ENCODE measurements at regions of chr1 and their contacts with region 1.

Region 1: DNA sequence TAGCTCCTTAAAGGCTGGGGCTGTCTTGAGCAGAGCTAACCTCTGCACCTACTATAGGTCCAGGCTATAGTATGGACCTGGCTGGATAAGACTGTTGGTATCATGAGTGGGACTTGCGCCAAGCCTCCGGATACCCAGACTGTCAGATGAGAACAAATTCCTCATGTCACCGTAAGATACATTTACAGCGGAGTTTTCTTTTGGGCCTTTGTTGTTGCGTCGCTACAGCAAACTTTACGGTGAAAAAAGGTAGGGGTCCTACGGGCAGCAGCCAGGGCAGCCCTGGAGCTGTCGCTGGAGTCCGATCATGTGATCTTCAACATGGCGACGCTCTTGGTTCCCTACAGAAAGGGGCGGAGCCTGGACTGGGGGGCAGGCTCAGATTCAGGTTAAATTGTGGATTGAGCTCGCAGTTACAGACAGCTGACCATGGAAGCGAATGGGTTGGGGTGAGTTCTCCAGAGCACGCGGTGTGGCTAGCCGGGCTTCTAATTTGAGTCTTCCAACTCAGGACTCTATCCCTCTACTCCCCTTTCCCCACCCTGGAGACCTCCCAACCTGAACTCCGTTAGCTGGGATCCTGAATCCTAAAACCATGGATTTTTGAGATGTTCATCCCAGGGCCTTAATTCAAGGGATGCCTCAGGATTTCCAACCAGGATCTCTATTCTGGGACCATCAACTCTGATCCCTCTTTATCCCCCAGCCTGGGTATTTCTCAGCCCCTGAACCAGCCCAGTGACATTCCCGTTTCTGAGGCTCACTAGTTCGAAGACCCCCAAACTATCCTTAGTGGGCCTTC is at the start of gene UROD:
- DNase-seq: peak; percentile 95
- H3K4me3 Mint-ChIP-seq: peak within 1 kb of the TSS; percentile 74
- H3K27ac Mint-ChIP-seq: peak within 1 kb of the TSS; percentile 88
- H3K4me1 Mint-ChIP-seq: peaks cover 42% of the 10 kb centered on the region
- H3K27me3 Mint-ChIP-seq: no peaks in the 10 kb centered on the region

Region 2: DNA sequence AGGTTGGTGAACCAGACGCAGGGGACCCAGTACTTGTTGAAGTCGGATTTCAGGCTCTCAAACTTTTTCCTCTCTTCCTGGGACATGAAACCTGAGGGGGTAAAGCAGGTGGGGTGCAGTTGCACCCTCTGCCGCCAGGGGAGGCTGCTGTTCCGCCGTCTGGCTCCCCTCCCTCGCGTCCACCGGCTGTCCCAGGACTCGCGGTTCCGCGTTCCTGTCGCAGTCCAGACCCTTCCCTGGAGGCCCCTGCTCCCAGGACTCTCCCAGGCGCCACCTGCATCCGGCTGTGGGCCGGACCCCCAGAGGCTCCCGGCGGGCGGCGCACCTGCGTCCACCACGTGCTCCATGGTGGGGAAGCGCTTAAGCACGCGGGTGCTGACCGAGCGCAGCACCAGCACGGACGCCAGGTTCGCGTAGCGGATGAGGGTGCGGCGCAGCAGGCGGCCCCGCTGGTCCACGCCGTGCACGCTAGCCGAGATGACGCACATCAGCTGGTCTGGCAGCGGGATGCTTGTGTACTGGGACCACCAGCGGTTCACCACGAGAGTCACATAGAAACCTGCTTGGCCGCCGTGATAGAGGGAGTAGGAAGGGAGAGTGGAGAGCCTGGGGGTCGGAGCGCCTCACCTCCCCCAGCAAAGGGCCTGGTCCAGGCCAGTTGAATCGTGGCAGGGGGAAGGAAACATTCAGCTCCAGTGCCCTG is 225.7 kb before region 1 on chr1:
- CTCF ChIA-PET with region 1: interaction called, 20 read pairs
- DNase-seq: peak; percentile 84
- H3K4me3 Mint-ChIP-seq: peak overlapping the region; percentile 68
- H3K27ac Mint-ChIP-seq: peak overlapping the region; percentile 45
- H3K4me1 Mint-ChIP-seq: peaks cover 40% of the 10 kb centered on the region
- H3K27me3 Mint-ChIP-seq: peaks cover 25% of the 10 kb centered on the region

Region 3: GRCh38 chr1:44792783-44793714 is 219.0 kb before region 1 on chr1:
- CTCF ChIA-PET with region 1: interaction called, 16 read pairs
- DNase-seq: peak; percentile 17
- H3K4me3 Mint-ChIP-seq: no peak overlapping the region
- H3K27ac Mint-ChIP-seq: no peak overlapping the region
- H3K4me1 Mint-ChIP-seq: peaks cover 3% of the 10 kb centered on the region
- H3K27me3 Mint-ChIP-seq: peaks cover 26% of the 10 kb centered on the region

Region 4: DNA sequence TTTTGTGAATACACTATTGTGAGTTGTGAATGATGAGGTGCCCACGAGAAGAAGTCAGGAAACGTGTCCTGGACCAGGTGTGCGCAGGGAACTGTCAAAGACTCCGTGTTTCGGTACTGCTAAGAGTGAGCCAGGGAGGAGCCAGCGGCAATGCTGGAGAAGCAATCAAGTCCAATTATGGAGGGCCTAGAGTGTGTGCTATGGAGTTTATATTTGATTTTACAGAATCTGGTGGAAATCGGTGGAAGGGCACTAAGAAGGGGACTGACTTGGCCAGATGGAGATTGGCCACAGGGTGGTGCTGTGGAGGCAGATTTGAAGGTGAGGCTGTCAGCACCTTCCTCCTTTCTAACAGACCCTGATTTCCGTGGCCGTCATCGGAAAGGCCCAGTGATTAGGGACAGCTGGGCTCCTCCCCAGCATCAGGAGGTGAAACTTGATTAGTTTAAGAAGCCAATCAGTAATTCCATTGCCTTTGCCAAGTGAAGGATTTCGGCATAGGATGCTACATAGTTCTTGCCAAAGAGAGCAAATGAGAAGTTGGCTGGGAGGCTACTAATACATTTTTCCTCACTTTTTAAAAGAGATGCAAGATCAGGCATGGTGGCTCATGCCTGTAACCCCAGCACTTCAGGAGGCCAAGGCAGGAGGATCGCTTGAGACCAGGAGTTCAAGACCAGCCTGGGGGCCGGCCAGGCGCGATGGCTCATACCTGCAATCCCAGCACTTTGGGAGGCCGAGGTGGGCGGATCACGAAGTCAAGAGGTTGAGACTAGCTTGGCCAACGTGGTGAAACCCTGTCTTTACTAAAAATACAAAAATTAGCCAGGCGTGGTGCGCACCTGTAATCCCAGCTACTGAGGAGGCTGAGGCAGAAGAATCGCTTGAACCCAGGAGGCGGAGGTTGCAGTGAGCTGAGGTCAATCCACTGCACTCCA is 176.0 kb before region 1 on chr1:
- CTCF ChIA-PET with region 1: interaction called, 13 read pairs
- DNase-seq: peak; percentile 94
- H3K4me3 Mint-ChIP-seq: no peak overlapping the region
- H3K27ac Mint-ChIP-seq: no peak overlapping the region
- H3K4me1 Mint-ChIP-seq: peaks cover 10% of the 10 kb centered on the region
- H3K27me3 Mint-ChIP-seq: peaks cover 8% of the 10 kb centered on the region

Region 5: GRCh38 chr1:45059829-45060228 is 47.8 kb after region 1 on chr1:
- CTCF ChIA-PET with region 1: no interaction called
- DNase-seq: no peak
- H3K4me3 Mint-ChIP-seq: no peak overlapping the region
- H3K27ac Mint-ChIP-seq: no peak overlapping the region
- H3K4me1 Mint-ChIP-seq: no peaks in the 10 kb centered on the region
- H3K27me3 Mint-ChIP-seq: no peaks in the 10 kb centered on the region

Region 6: GRCh38 chr1:45303582-45304310 is 291.7 kb after region 1 on chr1:
- CTCF ChIA-PET with region 1: interaction called, 386 read pairs
- DNase-seq: peak; percentile 99
- H3K4me3 Mint-ChIP-seq: peak overlapping the region; percentile 88
- H3K27ac Mint-ChIP-seq: peak overlapping the region; percentile 93
- H3K4me1 Mint-ChIP-seq: peaks cover 47% of the 10 kb centered on the region
- H3K27me3 Mint-ChIP-seq: no peaks in the 10 kb centered on the region

Region 7: DNA sequence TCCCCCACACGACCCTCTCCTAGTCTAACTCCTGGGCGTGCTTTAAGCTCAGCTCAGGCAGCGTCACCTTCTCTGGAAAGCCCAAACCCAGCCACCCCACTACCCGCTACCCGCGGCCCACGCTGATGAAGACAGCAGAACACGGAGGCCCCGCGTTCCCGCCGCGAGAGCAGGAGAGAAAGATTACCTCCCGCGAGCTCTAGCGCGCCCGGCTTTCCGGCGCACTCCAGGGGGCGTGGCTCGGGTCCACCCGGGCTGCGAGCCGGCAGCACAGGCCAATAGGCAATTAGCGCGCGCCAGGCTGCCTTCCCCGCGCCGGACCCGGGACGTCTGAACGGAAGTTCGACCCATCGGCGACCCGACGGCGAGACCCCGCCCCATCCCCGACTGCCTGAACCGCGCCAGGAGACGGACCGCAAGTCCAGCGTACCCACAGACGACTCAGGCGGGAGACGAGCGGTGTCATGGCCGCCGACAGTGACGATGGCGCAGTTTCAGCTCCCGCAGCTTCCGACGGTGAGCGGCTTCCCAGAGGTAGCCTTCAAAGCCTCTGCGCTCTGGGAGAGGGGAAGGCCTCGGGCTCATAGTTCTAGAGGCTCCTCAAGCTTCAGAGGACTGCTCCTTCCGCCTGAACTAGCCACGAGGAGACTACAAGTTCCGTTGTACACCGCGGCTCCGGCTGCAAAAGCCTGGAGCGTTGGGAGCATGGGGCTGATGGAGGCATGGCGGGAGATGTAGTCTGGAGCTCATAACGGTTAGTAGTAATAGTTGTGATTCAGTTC is 327.9 kb after region 1 on chr1 and contains the starts of genes MUTYH and TOE1:
- CTCF ChIA-PET with region 1: interaction called, 14 read pairs
- DNase-seq: peak; percentile 97
- H3K4me3 Mint-ChIP-seq: peak within 1 kb of the TSS; percentile 98
- H3K27ac Mint-ChIP-seq: peak within 1 kb of the TSS; percentile 99
- H3K4me1 Mint-ChIP-seq: peaks cover 54% of the 10 kb centered on the region
- H3K27me3 Mint-ChIP-seq: no peaks in the 10 kb centered on the region

Measured in activated naive CD4-positive, alpha-beta T cell treated with anti-CD3 and anti-CD28 coated beads, Interleukin-2, amount 10 ng/mL, durations not matched to agents 7 days and 5 days (primary cell).